Activated T-helper 2 cell treated with anti-CD3 and anti-CD28 coated beads, Interferon-gamma antibody, Interleukin-2, Interleukin-4, amounts not matched to agents 10 μg/mL and 5 μg/mL and 100 μg/mL, durations not matched to agents 14 hours and 24 hours and 36 hours (primary cell): ENCODE measurements at regions of chr19 and their contacts with region 1.

Region 1: DNA sequence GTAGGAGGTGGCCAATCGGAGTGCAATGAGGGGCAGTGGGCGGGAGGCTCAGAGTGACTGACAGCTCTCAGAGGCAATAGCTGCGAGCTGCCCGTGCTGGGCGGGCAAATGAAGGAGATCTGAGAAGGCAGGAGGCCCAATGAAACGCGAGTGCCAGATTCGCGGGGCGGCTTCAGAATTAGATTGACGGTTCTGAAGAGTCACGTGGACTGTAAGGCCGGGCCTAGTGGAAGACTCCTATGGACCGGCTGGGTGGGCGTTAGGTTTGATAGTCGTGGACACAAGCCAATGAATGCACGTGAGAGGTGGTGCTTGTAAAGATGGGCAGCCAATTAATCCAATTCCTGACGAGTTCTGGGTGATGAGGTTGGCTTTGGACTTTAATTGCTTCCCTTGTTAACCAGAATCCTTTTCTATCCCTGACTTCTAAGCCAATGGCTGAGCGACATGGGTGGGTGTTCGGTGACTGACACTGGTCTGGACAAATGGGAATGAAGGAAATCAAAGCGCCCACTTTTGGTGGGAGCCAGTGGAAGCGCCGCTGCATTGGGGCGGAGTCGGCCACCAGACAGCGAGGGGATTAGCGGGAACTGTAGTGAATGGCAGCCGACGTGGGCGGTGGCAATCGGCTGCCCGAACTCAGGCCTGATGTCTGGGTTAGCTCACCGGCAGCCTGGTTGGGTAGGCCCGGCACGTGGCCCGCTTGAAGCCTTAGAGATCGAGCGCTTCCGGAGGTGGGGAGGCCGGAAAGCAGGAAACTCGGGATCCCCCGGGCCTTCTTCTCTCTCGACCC is 524 bp upstream of the KHSRP start:
- DNase-seq: peak; percentile 100
- H3K4me3 Mint-ChIP-seq: peak overlapping the region; percentile 74
- H3K27ac Mint-ChIP-seq: peak overlapping the region; percentile 96
- H3K4me1 Mint-ChIP-seq: peaks cover 25% of the 10 kb centered on the region
- H3K27me3 Mint-ChIP-seq: no peaks in the 10 kb centered on the region

Region 2: DNA sequence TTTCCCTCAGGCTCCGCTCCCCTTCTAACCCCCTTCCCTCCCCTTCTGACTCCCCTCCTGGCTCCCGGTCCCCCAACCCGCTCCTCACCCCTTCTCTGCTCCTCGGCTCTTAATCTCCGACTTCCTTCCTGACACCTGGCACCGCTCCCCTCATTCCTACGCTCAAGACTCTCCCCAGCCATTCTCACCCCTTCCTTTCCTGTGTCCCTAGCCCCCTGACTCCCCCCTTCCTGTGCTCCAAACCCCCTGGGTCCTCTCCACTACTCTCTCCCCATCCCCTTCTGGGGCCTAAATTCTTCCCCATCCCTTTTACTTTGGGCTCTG is 63.1 kb before region 1 on chr19:
- intact Hi-C with region 1: loop called (anchors 2 kb)
- DNase-seq: no peak
- H3K4me3 Mint-ChIP-seq: peak overlapping the region; percentile 98
- H3K27ac Mint-ChIP-seq: peak overlapping the region; percentile 98
- H3K4me1 Mint-ChIP-seq: peaks cover 11% of the 10 kb centered on the region
- H3K27me3 Mint-ChIP-seq: no peaks in the 10 kb centered on the region

Region 3: GRCh38 chr19:6372594-6373095 is 52.5 kb before region 1 on chr19 and contains the start of gene ALKBH7:
- intact Hi-C with region 1: loop called (anchors 1 kb)
- DNase-seq: peak; percentile 95
- H3K4me3 Mint-ChIP-seq: peak within 1 kb of the TSS; percentile 87
- H3K27ac Mint-ChIP-seq: peak within 1 kb of the TSS; percentile 88
- H3K4me1 Mint-ChIP-seq: peaks cover 8% of the 10 kb centered on the region
- H3K27me3 Mint-ChIP-seq: no peaks in the 10 kb centered on the region
- total RNA-seq, gene ALKBH7: 33.0 and 35.9 TPM in 2 replicates

Region 4: GRCh38 chr19:6393074-6393983 is 31.8 kb before region 1 on chr19 and contains the start of gene GTF2F1:
- intact Hi-C with region 1: loop called (anchors 1 kb)
- DNase-seq: peak; percentile 87
- H3K4me3 Mint-ChIP-seq: peak within 1 kb of the TSS; percentile 88
- H3K27ac Mint-ChIP-seq: peak within 1 kb of the TSS; percentile 95
- H3K4me1 Mint-ChIP-seq: peaks cover 22% of the 10 kb centered on the region
- H3K27me3 Mint-ChIP-seq: no peaks in the 10 kb centered on the region
- total RNA-seq, gene GTF2F1: 59.6 and 60.1 TPM in 2 replicates

Region 5: GRCh38 chr19:6442087-6442688 is 17.1 kb after region 1 on chr19:
- intact Hi-C with region 1: no loop called
- DNase-seq: no peak
- H3K4me3 Mint-ChIP-seq: no peak overlapping the region
- H3K27ac Mint-ChIP-seq: no peak overlapping the region
- H3K4me1 Mint-ChIP-seq: no peaks in the 10 kb centered on the region
- H3K27me3 Mint-ChIP-seq: no peaks in the 10 kb centered on the region

Region 6: DNA sequence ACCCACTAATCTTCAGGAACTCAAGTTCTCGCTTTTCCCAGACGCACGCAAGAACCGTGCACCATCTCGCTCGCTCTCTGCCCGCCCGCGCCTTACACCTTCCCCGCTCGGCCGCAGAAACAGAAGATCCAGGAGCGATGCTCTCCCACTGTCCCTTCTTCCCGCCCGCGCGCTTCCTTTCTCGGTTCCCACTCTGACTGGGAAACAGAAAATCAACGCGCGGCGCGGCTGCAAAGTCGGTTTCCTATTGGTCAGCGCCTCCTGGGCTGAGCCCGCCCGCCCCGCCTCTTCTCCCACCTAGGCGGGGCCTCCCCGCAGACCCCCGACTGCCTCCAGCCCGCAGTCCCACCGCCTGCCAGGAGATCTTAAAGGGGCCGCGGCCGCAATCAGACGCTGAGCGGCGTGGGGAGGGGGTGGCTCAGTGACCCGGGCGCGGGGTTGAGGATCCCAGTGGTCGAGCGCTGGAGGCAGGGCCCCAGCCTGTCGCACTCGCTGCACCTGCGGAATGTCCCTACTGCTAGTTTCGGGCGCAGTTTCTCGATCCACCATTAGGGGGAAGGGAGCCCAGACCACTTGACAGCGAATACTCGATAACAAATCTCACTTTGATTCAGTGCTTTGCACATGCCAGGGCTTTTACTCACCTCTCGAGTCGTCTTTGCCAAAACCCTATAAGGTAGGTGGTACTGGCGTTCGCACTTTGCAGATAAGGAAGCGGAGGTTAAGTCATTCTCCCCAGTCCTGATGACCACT is 35.1 kb after region 1 on chr19:
- intact Hi-C with region 1: loop called (anchors 1 kb)
- DNase-seq: peak; percentile 97
- H3K4me3 Mint-ChIP-seq: peak overlapping the region; percentile 88
- H3K27ac Mint-ChIP-seq: peak overlapping the region; percentile 44
- H3K4me1 Mint-ChIP-seq: peaks cover 8% of the 10 kb centered on the region
- H3K27me3 Mint-ChIP-seq: no peaks in the 10 kb centered on the region

Region 7: DNA sequence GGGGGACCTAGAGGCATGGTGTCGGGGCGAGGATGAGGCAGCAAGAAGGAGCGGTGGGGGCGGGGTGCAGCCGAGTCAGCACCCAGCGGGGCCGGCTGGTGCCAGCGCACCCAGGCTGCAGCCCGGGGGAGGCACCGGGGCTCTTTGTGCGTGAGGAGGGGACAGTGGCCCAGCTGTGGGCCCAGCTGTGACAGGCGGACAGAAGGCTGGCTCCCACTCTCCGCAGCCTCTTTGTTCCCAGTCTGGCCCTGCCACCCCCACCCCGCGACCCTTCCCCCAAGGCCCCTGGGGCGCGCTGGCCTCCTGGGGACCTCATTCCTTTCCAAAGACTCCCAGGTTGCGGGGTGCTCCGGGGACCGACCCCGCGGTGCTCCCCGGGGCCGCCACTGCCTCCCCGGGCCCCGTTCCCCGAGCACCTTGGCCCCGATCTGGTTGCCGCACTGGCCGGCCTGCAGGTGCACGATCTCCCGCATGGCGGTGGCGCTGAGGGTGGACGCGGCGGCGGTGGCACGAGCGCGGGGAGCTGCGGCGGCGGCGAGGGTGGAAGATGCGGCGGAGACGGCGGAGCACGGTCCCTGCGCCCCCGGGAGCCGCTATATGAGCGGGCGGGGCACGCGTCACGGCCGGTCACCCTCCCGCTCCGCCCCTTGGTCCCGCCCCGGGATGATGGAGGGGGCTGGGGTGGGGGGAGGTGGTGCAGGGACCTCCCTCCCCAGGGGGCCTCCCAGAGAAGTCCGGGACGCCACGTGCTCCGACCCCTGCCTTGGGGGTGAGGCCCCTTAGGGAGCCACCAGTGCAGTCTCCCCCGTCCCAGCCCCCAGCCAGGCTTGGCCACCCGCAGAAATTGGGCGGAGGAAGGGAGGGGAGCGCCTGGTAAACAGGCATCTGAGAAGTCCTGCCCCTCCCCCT is 76.9 kb after region 1 on chr19 and contains the start of gene TUBB4A:
- intact Hi-C with region 1: loop called (anchors 10 kb)
- DNase-seq: peak; percentile 42
- H3K4me3 Mint-ChIP-seq: peak within 1 kb of the TSS; percentile 80
- H3K27ac Mint-ChIP-seq: no peak within 1 kb of the TSS
- H3K4me1 Mint-ChIP-seq: peaks cover 19% of the 10 kb centered on the region
- H3K27me3 Mint-ChIP-seq: peaks cover 6% of the 10 kb centered on the region
- total RNA-seq, gene TUBB4A: 7.9 and 11.3 TPM in 2 replicates

Region 8: GRCh38 chr19:6587093-6587820 is 162.1 kb after region 1 on chr19:
- intact Hi-C with region 1: no loop called
- DNase-seq: no peak
- H3K4me3 Mint-ChIP-seq: peak overlapping the region; percentile 99
- H3K27ac Mint-ChIP-seq: peak overlapping the region; percentile 1
- H3K4me1 Mint-ChIP-seq: peaks cover 46% of the 10 kb centered on the region
- H3K27me3 Mint-ChIP-seq: peaks cover 31% of the 10 kb centered on the region